PC-9 (cell line): ENCODE measurements at regions of chr2 and their contacts with region 1.

Region 1: DNA sequence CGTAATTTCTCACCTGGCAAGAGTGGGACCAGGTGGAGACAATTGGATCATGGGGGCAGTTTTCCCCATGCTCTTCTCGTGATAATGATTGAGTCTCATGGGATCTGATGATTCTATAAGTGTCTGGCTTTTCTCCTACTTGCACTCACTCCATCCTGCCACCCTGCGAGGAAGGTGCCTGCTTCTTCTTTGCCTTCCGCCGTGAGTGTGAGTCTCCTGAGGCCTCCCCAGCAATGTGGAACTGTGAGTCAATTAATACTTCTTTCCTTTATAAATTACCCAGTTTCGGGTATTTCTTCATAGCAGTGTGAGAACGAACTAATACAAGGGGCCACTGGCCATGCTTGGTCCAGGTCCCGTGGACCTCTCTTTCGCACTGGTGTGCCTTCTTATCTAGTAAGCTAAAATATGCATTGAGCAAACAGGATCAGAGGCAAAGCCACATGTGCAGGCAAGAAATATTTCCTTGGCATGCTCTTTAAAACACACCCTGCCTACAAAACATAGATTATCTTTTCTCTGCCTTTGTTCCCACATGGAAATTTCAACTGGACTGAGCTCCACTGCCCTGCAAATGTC is 821.1 kb downstream of the TRIB2 start:
- DNase-seq: no peak
- H3K4me3 ChIP-seq: no peak overlapping the region
- H3K27ac ChIP-seq: no peak overlapping the region
- H3K4me1 ChIP-seq: no peaks in the 10 kb centered on the region
- H3K27me3 ChIP-seq: no peaks in the 10 kb centered on the region
- CTCF ChIP-seq: no peak

Region 2: GRCh38 chr2:13508671-13509070 is 29.2 kb before region 1 on chr2:
- CTCF ChIA-PET with region 1: no interaction called
- POLR2A ChIA-PET with region 1: interaction called, 12 read pairs
- intact Hi-C with region 1: no loop called
- DNase-seq: no peak
- H3K4me3 ChIP-seq: no peak overlapping the region
- H3K27ac ChIP-seq: no peak overlapping the region
- H3K4me1 ChIP-seq: no peaks in the 10 kb centered on the region
- H3K27me3 ChIP-seq: no peaks in the 10 kb centered on the region
- CTCF ChIP-seq: no peak

Region 3: DNA sequence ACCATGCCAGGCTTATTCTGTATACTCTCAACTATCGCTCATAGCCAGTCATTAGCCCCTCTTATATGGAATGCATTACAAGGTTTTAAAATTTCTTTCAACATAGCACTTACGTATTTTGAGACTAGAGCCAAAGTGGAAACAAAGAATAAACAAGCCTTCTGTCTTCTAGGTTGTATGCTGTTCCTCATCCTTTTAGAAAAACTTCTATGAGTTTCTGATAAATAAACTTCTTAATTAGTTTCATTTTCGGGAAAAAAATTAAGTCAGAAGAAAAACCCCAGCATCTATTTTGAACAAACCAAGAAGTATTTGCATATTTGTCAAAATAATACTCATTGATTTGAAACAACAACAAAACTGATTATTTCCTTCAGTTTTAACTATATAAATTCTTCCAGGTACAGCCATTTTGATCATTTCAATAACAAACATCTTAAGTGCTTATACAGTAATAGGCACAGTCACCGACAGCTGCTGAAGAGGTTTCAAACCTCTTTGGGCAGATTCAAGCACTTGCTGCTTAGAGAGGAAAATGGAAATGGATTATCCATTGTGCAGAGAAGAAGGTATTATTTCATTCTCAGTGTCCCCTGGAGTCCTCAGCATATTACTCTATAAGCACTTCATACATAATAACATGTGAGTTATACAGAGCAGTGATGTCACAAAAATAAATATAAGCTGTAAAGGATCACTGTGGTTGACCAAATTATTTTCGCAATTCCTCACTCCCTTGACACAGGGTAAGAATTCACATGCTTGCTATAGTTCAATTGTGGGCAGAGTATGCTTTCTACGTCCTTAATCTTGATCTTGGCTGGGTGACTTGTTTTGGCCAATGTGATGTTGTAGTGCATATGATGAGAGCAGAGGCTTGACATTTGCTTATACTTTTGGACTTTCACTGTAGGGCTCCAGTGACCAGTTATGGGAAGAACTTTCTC is 12.7 kb after region 1 on chr2:
- CTCF ChIA-PET with region 1: no interaction called
- POLR2A ChIA-PET with region 1: no interaction called
- intact Hi-C with region 1: no loop called
- DNase-seq: no peak
- H3K4me3 ChIP-seq: no peak overlapping the region
- H3K27ac ChIP-seq: no peak overlapping the region
- H3K4me1 ChIP-seq: 0 out of 2 replicates have a peak, but pooled peaks cover under 1% of the 10 kb centered on the region
- H3K27me3 ChIP-seq: no peaks in the 10 kb centered on the region
- CTCF ChIP-seq: no peak